ENCODE measurements at regions of chr13 and their contacts with region 1.

Region 1: DNA sequence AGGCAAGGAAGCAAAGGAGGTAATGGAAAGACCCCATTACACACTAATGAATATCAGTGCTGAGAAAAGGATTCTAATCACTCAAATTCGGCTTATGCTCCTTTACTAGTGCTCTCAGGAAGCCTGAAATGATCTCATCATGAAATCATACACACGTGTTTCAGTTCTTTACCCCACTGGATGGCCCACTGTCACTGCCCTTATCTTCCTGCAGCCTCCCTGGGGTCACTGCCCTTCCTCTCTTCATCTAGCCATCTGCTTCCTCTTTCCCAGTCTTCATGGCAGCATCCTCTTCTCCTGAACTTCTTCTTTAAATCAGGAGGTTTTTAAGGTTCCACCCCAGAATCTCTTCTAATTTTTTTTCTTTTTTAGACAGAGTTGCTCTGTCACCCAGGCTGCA is 27.9 kb upstream of the EEF1AKMT1 start:
- DNase-seq: no peak
- H3K4me3 ChIP-seq: no peak overlapping the region
- H3K4me3 Mint-ChIP-seq: no peak overlapping the region
- H3K27ac Mint-ChIP-seq: no peak overlapping the region
- H3K4me1 ChIP-seq: no peaks in the 10 kb centered on the region
- H3K4me1 Mint-ChIP-seq: no peaks in the 10 kb centered on the region
- H3K27me3 ChIP-seq: no peaks in the 10 kb centered on the region
- H3K27me3 Mint-ChIP-seq: no peaks in the 10 kb centered on the region
- CTCF ChIP-seq: no peak

Region 2: GRCh38 chr13:20773194-20774080 is 28.3 kb before region 1 on chr13 and contains the start of gene EEF1AKMT1:
- CTCF ChIA-PET with region 1: no interaction called
- POLR2A ChIA-PET with region 1: no interaction called
- intact Hi-C with region 1: no loop called
- DNase-seq: peak; percentile 95 to 98
- H3K4me3 ChIP-seq: peak within 1 kb of the TSS; percentile 58
- H3K4me3 Mint-ChIP-seq: peak within 1 kb of the TSS; percentile 87
- H3K27ac Mint-ChIP-seq: peak within 1 kb of the TSS; percentile 97
- H3K4me1 ChIP-seq: peaks cover 9% of the 10 kb centered on the region
- H3K4me1 Mint-ChIP-seq: peaks cover 16% of the 10 kb centered on the region
- H3K27me3 ChIP-seq: no peaks in the 10 kb centered on the region
- H3K27me3 Mint-ChIP-seq: no peaks in the 10 kb centered on the region
- CTCF ChIP-seq: no peak
- total RNA-seq, gene EEF1AKMT1: 8.6 and 9.6 TPM in 2 replicates

Region 3: DNA sequence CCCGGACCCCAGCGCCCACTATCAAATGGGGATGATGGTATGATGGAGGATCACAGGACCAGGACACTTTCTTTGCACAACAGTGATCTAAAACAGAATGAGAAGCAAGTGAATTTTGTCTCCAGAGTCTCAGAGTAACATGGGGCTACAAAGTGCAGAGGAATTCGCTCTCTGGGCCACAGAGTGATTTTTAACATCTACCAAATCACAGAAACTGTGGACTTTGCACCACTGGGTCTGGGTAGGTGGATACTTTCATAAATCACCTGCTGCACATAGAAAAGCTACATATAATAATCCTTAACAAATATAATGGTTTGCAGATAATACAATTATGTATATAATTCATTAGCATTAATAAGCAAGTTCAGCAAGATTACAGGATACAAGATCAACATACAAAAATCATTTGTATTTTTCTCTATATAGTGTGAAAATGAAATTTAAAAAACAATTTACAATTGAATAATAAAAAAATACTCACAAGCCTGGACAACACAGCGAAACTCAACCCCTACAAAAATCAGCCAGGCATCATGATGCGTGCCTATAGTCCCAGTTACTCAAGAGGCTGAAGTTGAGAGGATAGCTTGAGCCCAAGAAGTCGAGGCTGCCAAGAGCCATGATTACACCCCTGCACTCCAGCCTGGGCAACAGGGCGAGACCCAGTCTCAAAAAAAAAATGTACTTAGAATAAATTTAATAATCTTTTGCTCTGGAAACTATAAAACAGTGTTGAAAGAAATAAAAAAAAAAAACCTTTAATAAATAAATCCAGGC is 32.4 kb after region 1 on chr13:
- CTCF ChIA-PET with region 1: no interaction called
- POLR2A ChIA-PET with region 1: interaction called, 10 read pairs
- intact Hi-C with region 1: no loop called
- DNase-seq: no peak
- H3K4me3 ChIP-seq: no peak overlapping the region
- H3K4me3 Mint-ChIP-seq: no peak overlapping the region
- H3K27ac Mint-ChIP-seq: no peak overlapping the region
- H3K4me1 ChIP-seq: no peaks in the 10 kb centered on the region
- H3K4me1 Mint-ChIP-seq: peaks cover 6% of the 10 kb centered on the region
- H3K27me3 ChIP-seq: no peaks in the 10 kb centered on the region
- H3K27me3 Mint-ChIP-seq: no peaks in the 10 kb centered on the region
- CTCF ChIP-seq: no peak